Naive thymus-derived CD4-positive, alpha-beta T cell (primary cell): ENCODE measurements at regions of chr4 and their contacts with region 1.

Region 1: DNA sequence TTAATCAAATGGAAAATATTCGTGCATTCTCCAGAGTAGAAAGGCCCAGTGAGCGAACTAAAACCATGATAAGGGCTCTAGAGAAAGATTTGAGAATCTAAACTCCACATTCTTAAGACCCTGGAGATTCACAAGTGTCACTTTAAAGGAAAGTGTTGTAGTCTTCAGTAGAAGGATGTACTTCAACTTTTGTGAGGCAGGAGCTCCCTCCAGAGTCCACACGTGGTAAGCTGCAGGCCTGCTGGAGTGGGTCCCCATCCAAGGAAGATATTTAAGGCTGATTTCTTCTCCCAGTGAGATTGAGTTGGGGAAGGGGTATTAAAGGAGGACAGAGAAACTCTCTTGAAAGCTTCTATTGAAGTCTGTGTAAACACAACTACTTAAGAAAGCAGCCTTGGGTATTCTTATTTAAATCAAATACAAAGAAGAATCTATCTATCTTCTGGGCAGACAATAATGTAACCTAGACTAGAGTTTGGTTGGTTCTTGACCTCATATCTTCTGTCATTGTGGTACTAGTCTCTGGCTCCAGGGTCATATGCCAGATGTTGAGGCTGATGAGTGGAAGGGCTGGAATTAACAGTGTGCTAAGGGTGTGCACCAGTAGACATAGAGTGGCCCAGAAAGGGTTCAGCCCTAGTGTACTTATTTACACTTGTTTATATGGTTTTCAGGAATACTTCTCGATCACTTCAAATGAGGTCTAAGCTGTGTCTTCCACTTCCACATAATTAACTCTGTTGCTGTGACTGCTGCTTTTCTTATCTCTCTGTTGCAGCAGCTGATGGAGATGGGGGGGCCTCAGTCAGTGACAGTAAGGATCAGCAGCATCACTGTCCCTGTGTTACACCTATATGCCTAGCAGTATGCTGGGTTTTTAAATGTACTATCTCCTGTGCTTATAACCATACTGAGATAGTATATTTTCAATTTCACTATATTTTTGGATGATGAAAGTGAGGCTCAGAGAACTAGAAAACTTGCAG is 76.1 kb downstream of the HMGB2 start:
- DNase-seq: peak in 8 of 9 donors; percentile 26 to 62 (median 48)
- ATAC-seq: peak; percentile 83
- H3K4me3 ChIP-seq: no peak overlapping the region
- H3K4me3 Mint-ChIP-seq: no peak overlapping the region
- H3K27ac ChIP-seq: no peak overlapping the region
- H3K27ac Mint-ChIP-seq: no peak overlapping the region
- H3K4me1 ChIP-seq: no peaks in the 10 kb centered on the region
- H3K4me1 Mint-ChIP-seq: peaks cover 0 to 12% (median 5%) of the 10 kb centered on the region in 7 donors
- H3K27me3 ChIP-seq: no peaks in the 10 kb centered on the region
- H3K27me3 Mint-ChIP-seq: no peaks in the 10 kb centered on the region

Region 2: GRCh38 chr4:173025131-173025530 is 232.9 kb before region 1 on chr4:
- CTCF ChIA-PET with region 1: interaction called, 13 read pairs
- POLR2A ChIA-PET with region 1: no interaction called
- intact Hi-C with region 1: loop called (anchors 1 kb)
- DNase-seq: peak in 7 of 9 donors; percentile 10 to 50 (median 42)
- ATAC-seq: peak; percentile 67
- H3K4me3 ChIP-seq: no peak overlapping the region
- H3K4me3 Mint-ChIP-seq: no peak overlapping the region
- H3K27ac ChIP-seq: no peak overlapping the region
- H3K27ac Mint-ChIP-seq: no peak overlapping the region
- H3K4me1 ChIP-seq: no peaks in the 10 kb centered on the region
- H3K4me1 Mint-ChIP-seq: peaks cover 0 to 4% (median 0%) of the 10 kb centered on the region in 7 donors
- H3K27me3 ChIP-seq: no peaks in the 10 kb centered on the region
- H3K27me3 Mint-ChIP-seq: peaks cover 0 to 7% (median 5%) of the 10 kb centered on the region in 5 donors

Region 3: GRCh38 chr4:173233857-173234256 is 24.2 kb before region 1 on chr4:
- CTCF ChIA-PET with region 1: no interaction called
- POLR2A ChIA-PET with region 1: no interaction called
- intact Hi-C with region 1: loop called in 1 of 2 experiments (anchors 1 kb)
- DNase-seq: no peak
- ATAC-seq: no peak
- H3K4me3 ChIP-seq: no peak overlapping the region
- H3K4me3 Mint-ChIP-seq: no peak overlapping the region
- H3K27ac ChIP-seq: no peak overlapping the region
- H3K27ac Mint-ChIP-seq: no peak overlapping the region
- H3K4me1 ChIP-seq: no peaks in the 10 kb centered on the region
- H3K4me1 Mint-ChIP-seq: peaks cover 0 to 39% (median 22%) of the 10 kb centered on the region in 7 donors
- H3K27me3 ChIP-seq: no peaks in the 10 kb centered on the region
- H3K27me3 Mint-ChIP-seq: no peaks in the 10 kb centered on the region